Activated CD4-positive, alpha-beta memory T cell treated with anti-CD3 and anti-CD28 coated beads, Interleukin-2, amount 10 ng/mL, durations not matched to agents 7 days and 5 days (primary cell): ENCODE measurements at regions of chr12 and their contacts with region 1.

Region 1: GRCh38 chr12:124927201-124928094 is 13.0 kb upstream of the UBC start:
- DNase-seq: peak; percentile 93
- H3K4me3 Mint-ChIP-seq: peak overlapping the region; percentile 83
- H3K27ac Mint-ChIP-seq: peak overlapping the region; percentile 96
- H3K4me1 Mint-ChIP-seq: peaks cover 32% of the 10 kb centered on the region
- H3K27me3 Mint-ChIP-seq: peaks cover 6% of the 10 kb centered on the region

Region 2: DNA sequence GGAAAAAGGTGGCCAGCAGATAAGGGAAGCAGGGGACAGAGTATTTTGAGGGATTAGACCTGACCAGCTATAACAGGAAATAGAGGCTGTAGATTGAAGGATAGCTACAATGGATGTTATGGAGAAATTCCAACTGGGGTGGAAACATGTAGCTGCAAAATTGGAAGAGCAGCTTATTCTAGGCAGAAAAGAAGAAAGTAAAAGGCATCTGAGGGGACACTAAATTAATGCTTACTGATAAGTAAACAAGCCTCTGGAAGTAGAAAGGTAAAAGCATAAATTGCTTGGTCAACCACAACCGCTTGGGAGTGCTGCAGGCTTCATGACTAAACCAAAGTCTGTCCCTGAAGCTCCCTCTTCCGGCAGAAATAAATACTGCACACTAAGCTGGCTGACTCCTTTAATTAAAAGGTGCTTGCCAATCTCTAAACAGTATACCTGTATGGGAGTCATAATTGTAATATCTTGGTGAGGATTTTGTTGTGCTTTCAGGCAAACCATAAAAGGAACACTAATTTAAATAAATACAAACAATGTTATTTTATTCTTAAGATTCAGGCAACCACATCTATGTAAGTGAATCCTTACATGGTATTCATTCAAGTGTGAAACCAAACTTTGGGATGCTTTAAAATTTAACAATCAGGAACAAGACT is 20.7 kb before region 1 on chr12:
- CTCF ChIA-PET with region 1: interaction called, 15 read pairs
- POLR2A ChIA-PET with region 1: interaction called, 44 read pairs
- DNase-seq: peak; percentile 90
- H3K4me3 Mint-ChIP-seq: no peak overlapping the region
- H3K27ac Mint-ChIP-seq: no peak overlapping the region
- H3K4me1 Mint-ChIP-seq: peaks cover 33% of the 10 kb centered on the region
- H3K27me3 Mint-ChIP-seq: peaks cover 2% of the 10 kb centered on the region